ENCODE measurements at regions of chr12 and their contacts with region 1.

Region 1: GRCh38 chr12:88413646-88414045 is 166.6 kb downstream of the KITLG start:
- DNase-seq: no peak
- H3K4me3 ChIP-seq: no peak overlapping the region
- H3K27ac ChIP-seq: no peak overlapping the region
- H3K4me1 ChIP-seq: no peaks in the 10 kb centered on the region
- H3K27me3 ChIP-seq: no peaks in the 10 kb centered on the region
- CTCF ChIP-seq: no peak
- EP300 ChIP-seq: no peak
- POLR2A ChIP-seq: no peak

Region 2: DNA sequence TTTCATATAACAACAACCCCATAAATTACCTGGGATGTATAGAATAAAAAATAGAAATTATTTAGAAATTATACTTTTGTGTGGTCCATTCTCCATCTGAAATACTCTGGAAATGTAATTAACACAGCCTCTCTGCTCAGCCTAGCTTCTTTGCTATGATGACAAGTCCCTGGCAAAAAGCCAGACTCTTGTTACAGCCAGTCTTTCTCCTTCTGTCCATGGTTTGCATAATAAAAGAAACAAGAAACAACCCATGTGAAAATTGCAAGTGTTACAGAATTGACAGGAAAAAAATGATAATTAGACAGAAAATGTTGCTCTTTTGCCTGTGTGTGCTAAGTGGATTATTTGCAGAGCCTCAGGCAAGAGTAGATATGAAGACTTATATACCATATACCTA is 445.8 kb before region 1 on chr12:
- in situ Hi-C with region 1: no loop called
- intact Hi-C with region 1: no loop called
- DNase-seq: no peak
- H3K4me3 ChIP-seq: no peak overlapping the region
- H3K27ac ChIP-seq: no peak overlapping the region
- H3K4me1 ChIP-seq: no peaks in the 10 kb centered on the region
- H3K27me3 ChIP-seq: no peaks in the 10 kb centered on the region
- CTCF ChIP-seq: no peak
- EP300 ChIP-seq: no peak
- POLR2A ChIP-seq: no peak

Region 3: DNA sequence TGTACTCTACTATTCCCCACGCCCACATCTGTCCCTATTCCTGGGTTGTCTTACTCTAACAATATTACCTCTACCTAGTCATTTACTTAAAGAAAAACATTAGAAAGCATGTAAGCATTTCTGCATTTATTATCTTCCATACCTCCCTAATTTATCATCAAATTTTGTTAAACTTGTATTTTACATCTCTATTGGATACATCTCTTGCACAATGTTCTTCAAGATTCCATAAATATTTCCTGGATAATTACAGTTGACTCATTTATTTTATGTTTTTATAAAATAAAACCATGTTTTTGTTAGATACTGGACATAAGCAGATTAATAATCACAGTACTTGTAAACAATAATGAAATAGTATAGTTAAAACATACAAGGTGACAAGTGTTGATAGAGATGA is 62.5 kb before region 1 on chr12:
- in situ Hi-C with region 1: no loop called
- intact Hi-C with region 1: loop called (anchors 2 kb)
- DNase-seq: no peak
- H3K4me3 ChIP-seq: no peak overlapping the region
- H3K27ac ChIP-seq: no peak overlapping the region
- H3K4me1 ChIP-seq: no peaks in the 10 kb centered on the region
- H3K27me3 ChIP-seq: no peaks in the 10 kb centered on the region
- CTCF ChIP-seq: no peak
- EP300 ChIP-seq: no peak
- POLR2A ChIP-seq: no peak